ENCODE measurements at regions of chr12 and their contacts with region 1.

Region 1: GRCh38 chr12:6195665-6196535 is 4.3 kb upstream of the CD9 start:
- DNase-seq: peak; percentile 83 to 92 (median 89)
- ATAC-seq: peak; percentile 67 to 75
- H3K4me3 ChIP-seq: no peak overlapping the region
- H3K27ac ChIP-seq: peak overlapping the region; percentile 22
- H3K4me1 ChIP-seq: no peaks in the 10 kb centered on the region
- H3K27me3 ChIP-seq: no peaks in the 10 kb centered on the region

Region 2: DNA sequence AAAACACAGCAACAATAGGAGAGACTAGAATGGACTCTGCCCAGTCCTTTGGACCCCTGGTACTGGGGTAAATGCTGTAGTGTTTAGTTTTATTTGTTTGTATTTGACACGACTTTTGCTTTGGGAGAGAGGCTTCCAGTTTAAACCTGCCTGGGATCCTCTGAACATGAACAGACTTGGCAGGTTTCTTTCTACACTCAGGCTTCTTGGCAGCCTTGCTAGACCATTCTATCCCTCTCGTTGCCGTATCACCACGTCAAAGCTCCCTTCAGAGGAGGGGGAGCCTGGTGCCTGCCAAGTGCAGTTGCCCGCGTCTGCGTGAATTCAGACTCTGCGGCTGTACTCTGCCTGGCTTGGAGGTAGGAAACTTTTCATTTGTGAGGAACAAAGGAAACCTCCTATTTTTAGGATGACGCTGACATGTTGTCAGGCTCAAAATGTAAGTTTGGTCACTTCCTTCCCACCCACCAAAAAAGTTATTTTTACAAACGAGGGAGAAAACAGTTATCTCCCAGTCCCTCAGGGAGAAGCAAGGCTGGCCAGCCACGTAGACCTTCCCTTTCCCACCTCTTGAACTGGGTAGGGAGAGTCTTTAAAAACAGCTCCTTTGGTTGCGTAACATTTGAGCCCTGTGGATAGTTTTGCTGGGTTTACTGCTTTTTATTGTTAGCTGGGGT is 30.2 kb after region 1 on chr12:
- intact Hi-C with region 1: loop called in 1 of 4 experiments (anchors 2 kb)
- DNase-seq: peak; percentile 85 to 92 (median 92)
- ATAC-seq: peak; percentile 79 to 87
- H3K4me3 ChIP-seq: peak overlapping the region; percentile 14
- H3K27ac ChIP-seq: peak overlapping the region; percentile 95
- H3K4me1 ChIP-seq: peaks cover 37% of the 10 kb centered on the region
- H3K27me3 ChIP-seq: no peaks in the 10 kb centered on the region

Region 3: DNA sequence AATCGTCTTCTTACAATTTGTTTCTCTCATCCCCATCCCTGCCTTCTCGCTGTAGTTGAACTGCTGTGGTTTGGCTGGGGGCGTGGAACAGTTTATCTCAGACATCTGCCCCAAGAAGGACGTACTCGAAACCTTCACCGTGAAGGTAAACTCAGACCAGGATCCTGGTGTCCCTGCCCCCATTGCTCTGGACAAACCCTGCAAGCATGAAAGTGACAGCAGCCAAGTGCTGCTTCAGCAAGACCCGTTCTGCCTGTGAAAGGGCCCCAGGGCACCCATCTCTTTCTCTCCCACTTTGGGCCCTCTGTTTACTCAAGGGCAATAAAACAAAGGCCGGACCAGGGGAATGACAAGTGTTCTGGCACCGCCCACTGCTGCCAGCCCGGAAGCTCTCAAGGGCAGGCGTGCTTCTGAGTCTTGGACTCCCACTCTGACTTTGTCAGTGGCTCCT is 39.5 kb after region 1 on chr12:
- intact Hi-C with region 1: loop called in 1 of 4 experiments (anchors 5 kb)
- DNase-seq: peak in 2 of 3 donors; percentile 44 to 55
- ATAC-seq: peak in 1 of 2 donors; percentile 6
- H3K4me3 ChIP-seq: no peak overlapping the region
- H3K27ac ChIP-seq: no peak overlapping the region
- H3K4me1 ChIP-seq: peaks cover 27% of the 10 kb centered on the region
- H3K27me3 ChIP-seq: no peaks in the 10 kb centered on the region

Region 4: DNA sequence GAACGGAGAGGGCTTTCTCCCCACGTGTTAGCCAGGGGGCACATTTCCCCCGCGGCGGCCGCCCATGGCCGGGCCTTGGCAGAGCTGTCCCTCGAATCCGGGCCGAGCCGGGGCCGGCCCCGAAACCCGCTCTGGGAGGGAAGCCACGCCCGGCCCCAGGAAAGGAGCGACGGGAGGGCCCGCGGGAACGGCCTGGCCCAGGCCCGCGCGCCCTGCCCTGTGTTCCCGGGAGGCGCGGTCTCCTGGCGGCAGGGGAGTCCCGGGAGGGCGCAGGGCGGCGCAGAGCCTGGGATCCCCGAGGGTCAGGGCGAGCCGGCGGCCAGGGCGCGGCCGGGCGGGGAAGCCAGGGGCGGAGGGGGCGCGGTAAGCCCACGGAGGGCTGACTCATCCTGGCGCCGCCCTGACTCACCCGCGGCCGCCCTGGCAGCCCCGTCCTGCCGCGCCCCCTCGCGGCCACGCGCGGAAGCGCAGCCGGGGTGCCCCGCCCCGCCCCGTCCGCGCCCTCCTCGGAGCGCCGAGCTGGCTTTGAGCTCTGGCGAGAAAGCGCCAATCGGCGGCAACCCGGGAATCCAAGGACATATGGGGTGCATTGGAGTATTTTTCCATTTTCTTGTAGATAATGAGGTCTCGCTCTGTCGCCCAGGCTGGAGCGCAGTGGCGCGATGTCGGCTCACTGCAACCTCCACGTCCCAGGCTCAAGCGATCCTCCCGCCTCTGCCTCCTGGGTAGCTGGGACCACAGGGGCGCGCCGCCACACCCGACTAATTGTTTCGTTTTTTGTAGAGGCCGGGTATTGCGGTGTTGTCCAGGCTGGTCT is 82.7 kb after region 1 on chr12:
- intact Hi-C with region 1: loop called (anchors 2 to 5 kb)
- DNase-seq: peak; percentile 91 to 95 (median 94)
- ATAC-seq: peak; percentile 83 to 95
- H3K4me3 ChIP-seq: peak overlapping the region; percentile 37
- H3K27ac ChIP-seq: peak overlapping the region; percentile 31
- H3K4me1 ChIP-seq: peaks cover 13% of the 10 kb centered on the region
- H3K27me3 ChIP-seq: no peaks in the 10 kb centered on the region